Calu3 (cell line): ENCODE measurements at regions of chr10 and their contacts with region 1.

Region 1: GRCh38 chr10:91632671-91633550 is at the start of gene PPP1R3C:
- DNase-seq: peak; percentile 84
- H3K4me3 Mint-ChIP-seq: peak within 1 kb of the TSS; percentile 92
- H3K27ac Mint-ChIP-seq: peak within 1 kb of the TSS; percentile 41
- H3K4me1 Mint-ChIP-seq: peaks cover 15% of the 10 kb centered on the region
- H3K27me3 Mint-ChIP-seq: no peaks in the 10 kb centered on the region
- CTCF ChIP-seq: no peak
- total RNA-seq, gene PPP1R3C: 5.5 and 7.8 TPM in 2 replicates

Region 2: DNA sequence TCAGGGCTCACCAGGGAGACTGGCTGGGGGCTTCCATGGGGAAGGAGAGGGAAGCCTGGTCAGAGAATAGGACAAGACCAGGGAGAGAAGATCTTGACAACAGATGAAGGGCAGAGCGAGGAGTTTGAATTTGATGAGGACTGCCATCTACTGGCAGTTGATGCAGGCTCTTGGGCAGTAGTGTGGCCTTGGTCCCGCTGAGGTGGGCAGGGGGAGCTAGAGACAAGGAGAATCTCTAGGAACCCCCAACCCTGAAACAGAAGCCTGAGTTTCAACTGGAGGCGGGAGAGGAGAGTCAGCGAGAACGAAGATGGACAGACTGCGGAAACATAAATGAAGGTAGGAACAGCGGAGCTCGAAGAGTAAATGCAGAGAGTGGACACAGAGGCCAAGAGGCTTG is 81.1 kb before region 1 on chr10:
- CTCF ChIA-PET with region 1: interaction called, 9 read pairs
- intact Hi-C with region 1: loop called (anchors 1 kb)
- DNase-seq: peak; percentile 27
- H3K4me3 Mint-ChIP-seq: no peak overlapping the region
- H3K27ac Mint-ChIP-seq: no peak overlapping the region
- H3K4me1 Mint-ChIP-seq: peaks cover 37% of the 10 kb centered on the region
- H3K27me3 Mint-ChIP-seq: no peaks in the 10 kb centered on the region
- CTCF ChIP-seq: peak; percentile 50

Region 3: GRCh38 chr10:91556691-91557566 is 76.0 kb before region 1 on chr10:
- CTCF ChIA-PET with region 1: interaction called, 9 read pairs
- intact Hi-C with region 1: loop called (anchors 1 kb)
- DNase-seq: peak; percentile 39
- H3K4me3 Mint-ChIP-seq: no peak overlapping the region
- H3K27ac Mint-ChIP-seq: peak overlapping the region; percentile 75
- H3K4me1 Mint-ChIP-seq: peaks cover 56% of the 10 kb centered on the region
- H3K27me3 Mint-ChIP-seq: no peaks in the 10 kb centered on the region
- CTCF ChIP-seq: no peak

Region 4: GRCh38 chr10:91597197-91597881 is 35.6 kb before region 1 on chr10:
- CTCF ChIA-PET with region 1: interaction called, 6 read pairs
- intact Hi-C with region 1: loop called (anchors 5 kb)
- DNase-seq: peak; percentile 24
- H3K4me3 Mint-ChIP-seq: no peak overlapping the region
- H3K27ac Mint-ChIP-seq: peak overlapping the region; percentile 76
- H3K4me1 Mint-ChIP-seq: peaks cover 56% of the 10 kb centered on the region
- H3K27me3 Mint-ChIP-seq: no peaks in the 10 kb centered on the region
- CTCF ChIP-seq: no peak

Region 5: DNA sequence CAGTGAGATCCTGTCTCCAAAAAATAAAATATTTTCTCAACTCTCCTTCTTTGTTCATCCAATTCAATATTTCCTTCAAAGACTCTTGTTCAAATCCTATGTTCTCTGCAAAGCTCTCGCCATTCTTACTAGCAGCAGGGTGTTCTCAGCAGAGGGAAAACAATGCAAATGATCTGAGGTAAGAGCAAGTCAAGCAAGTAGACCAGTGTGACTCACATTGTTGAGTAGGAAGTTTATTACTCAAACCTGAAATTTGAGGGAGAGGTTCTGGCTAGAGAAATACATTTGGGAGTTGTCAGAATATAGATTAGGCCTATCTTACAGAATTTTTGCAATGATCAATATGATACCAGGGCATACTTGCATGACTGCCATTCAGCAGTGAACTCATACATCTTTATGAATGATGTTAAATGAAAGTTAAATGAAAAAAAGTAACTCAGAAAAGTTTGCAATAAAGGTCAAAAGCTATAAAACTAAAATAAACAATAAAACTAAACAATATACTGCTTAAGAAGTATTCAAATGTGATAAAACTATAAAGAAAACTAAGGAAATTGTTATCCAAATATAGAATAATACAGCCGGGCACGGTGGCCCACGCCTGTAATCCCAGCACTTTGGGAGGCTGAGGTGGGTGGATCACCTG is 935.2 kb after region 1 on chr10:
- CTCF ChIA-PET with region 1: no interaction called
- intact Hi-C with region 1: no loop called
- DNase-seq: no peak
- H3K4me3 Mint-ChIP-seq: no peak overlapping the region
- H3K27ac Mint-ChIP-seq: peak overlapping the region; percentile 57
- H3K4me1 Mint-ChIP-seq: peaks cover 32% of the 10 kb centered on the region
- H3K27me3 Mint-ChIP-seq: no peaks in the 10 kb centered on the region
- CTCF ChIP-seq: no peak